Activated CD4-positive, alpha-beta T cell treated with anti-CD3 and anti-CD28 coated beads, Interleukin-2, amount 10 ng/mL, durations not matched to agents 24 days and 14 days (primary cell): ENCODE measurements at regions of chr7 and their contacts with region 1.

Region 1: DNA sequence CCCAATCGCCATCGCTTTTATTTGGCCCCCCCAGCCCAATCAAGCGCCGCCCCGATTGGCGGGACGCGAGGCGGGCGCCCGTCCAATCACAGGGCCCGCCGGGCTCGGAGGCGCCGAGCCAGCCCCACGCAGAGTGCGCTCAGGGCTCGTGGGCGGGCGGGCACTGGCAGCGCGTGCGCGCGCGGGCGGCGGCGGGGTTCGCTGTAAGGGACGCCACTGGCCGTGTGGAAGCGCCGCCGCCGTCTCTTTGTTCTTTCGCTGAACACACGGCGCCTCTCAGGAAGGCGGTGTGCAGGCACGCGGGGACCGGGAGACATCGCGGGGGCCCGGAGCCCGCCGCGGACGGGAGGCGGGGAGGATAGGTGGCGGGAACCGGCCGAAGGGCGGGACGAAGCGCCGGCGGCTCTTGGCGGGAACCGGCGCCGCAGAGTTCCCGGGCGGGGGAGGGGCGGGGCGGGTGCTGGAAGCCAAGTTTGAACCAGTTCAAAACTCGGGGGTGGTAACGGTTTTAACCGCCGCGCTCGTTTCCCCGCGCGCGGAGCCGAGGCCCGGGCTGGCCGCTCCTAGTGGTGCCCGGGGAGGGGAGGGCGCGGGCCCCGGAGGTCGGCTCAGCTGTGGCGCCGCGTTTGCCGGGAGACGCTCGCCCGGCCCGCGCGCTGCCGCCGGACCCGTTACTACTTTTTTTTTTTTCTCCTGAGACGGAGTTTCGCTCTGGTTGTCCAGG is 370 bp upstream of the EZH2 start:
- DNase-seq: peak; percentile 99
- H3K4me3 Mint-ChIP-seq: peak overlapping the region; percentile 93
- H3K27ac Mint-ChIP-seq: peak overlapping the region; percentile 99
- H3K4me1 Mint-ChIP-seq: peaks cover 26% of the 10 kb centered on the region
- H3K27me3 Mint-ChIP-seq: no peaks in the 10 kb centered on the region

Region 2: DNA sequence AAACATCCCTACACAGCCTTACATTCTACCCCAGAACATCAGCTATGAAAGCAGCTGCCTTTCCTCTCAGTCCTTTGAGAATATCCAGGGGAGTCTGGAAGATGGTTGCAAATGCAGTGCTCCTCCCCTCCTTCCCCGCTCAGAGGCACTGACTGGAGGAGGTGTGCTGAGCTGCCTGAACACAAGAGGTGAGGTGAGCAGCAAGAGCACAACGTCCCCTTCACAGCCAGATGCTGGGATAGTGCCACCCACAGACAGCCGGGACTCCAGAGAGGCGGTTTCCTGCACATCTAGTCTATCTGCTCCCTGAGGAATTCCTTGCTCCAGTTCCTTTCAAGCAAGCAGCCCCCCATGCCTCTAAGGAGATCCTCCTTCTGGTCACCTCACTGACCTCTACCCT is 74.6 kb before region 1 on chr7:
- intact Hi-C with region 1: no loop called
- DNase-seq: peak; percentile 47
- H3K4me3 Mint-ChIP-seq: no peak overlapping the region
- H3K27ac Mint-ChIP-seq: no peak overlapping the region
- H3K4me1 Mint-ChIP-seq: peaks cover 2% of the 10 kb centered on the region
- H3K27me3 Mint-ChIP-seq: no peaks in the 10 kb centered on the region

Region 3: GRCh38 chr7:148849393-148850098 is 34.9 kb before region 1 on chr7:
- intact Hi-C with region 1: loop called (anchors 5 kb)
- DNase-seq: no peak
- H3K4me3 Mint-ChIP-seq: no peak overlapping the region
- H3K27ac Mint-ChIP-seq: peak overlapping the region; percentile 22
- H3K4me1 Mint-ChIP-seq: peaks cover 50% of the 10 kb centered on the region
- H3K27me3 Mint-ChIP-seq: no peaks in the 10 kb centered on the region

Region 4: GRCh38 chr7:148856891-148857290 is 27.6 kb before region 1 on chr7:
- intact Hi-C with region 1: loop called (anchors 1 kb)
- DNase-seq: no peak
- H3K4me3 Mint-ChIP-seq: peak overlapping the region; percentile 32
- H3K27ac Mint-ChIP-seq: peak overlapping the region; percentile 79
- H3K4me1 Mint-ChIP-seq: peaks cover 40% of the 10 kb centered on the region
- H3K27me3 Mint-ChIP-seq: no peaks in the 10 kb centered on the region

Region 5: DNA sequence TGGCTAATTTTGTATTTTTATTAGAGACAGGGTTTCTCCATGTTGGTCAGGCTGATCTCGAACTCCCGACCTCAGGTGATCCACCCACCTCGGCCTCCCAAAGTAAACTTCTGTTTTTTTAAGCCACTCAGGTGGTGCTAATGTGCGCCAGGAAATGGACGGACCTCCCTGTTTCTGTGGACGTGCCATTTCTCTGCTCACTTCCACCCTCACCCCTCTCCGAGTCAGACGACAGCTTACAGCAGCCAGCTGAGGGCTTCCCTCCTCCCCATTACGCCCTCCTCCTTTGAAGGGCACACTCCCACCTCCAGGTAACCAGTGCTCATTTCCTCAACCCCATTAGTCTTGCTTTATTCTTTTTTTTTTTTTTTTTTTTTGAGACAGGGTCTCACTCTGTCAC is 41.4 kb after region 1 on chr7:
- intact Hi-C with region 1: loop called (anchors 1 kb)
- DNase-seq: no peak
- H3K4me3 Mint-ChIP-seq: no peak overlapping the region
- H3K27ac Mint-ChIP-seq: no peak overlapping the region
- H3K4me1 Mint-ChIP-seq: peaks cover 46% of the 10 kb centered on the region
- H3K27me3 Mint-ChIP-seq: no peaks in the 10 kb centered on the region

Region 6: DNA sequence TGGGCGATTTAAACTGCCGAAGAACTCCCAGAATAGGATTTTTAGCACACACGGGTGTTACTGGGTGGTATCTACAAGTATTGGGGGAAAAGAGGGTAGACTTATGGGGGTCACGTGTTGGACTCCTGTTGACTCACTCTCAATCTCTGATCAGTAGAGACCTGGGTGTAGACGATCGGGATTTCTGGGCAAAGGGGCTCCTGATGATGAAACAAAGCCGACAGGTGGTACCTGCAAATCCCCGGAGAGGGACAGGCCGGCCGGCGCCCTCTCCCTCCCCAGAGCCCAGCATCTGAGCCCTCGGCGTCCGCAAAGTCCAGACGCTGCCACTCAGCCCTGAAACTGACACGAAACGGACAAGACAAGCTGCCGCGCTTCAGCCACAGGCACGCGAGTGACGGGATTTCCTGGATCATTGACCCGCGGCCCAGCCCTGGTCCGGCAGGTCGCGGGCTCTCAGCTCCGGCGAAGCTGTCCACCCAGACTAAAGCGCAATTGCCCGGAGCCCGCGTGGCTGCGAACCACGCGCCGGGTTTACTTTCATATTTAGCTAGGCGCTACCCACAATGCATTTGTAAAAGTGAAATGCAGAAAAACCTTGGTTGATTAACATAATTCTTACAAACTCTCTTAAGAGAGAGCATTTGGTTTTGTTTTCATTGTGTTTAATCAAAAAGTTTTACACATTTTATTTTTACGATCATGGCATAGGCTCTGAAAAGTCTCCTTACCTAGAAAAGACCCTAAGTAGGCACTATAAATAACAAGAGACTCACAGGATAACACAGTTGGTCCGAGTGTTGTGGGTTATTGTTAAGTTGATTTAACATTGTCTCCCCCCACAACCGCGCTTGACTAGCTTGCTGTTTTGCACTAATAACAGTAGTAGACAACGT is 56.5 kb after region 1 on chr7:
- intact Hi-C with region 1: loop called (anchors 1 kb)
- DNase-seq: peak; percentile 92
- H3K4me3 Mint-ChIP-seq: peak overlapping the region; percentile 97
- H3K27ac Mint-ChIP-seq: peak overlapping the region; percentile 99
- H3K4me1 Mint-ChIP-seq: peaks cover 17% of the 10 kb centered on the region
- H3K27me3 Mint-ChIP-seq: no peaks in the 10 kb centered on the region

Region 7: DNA sequence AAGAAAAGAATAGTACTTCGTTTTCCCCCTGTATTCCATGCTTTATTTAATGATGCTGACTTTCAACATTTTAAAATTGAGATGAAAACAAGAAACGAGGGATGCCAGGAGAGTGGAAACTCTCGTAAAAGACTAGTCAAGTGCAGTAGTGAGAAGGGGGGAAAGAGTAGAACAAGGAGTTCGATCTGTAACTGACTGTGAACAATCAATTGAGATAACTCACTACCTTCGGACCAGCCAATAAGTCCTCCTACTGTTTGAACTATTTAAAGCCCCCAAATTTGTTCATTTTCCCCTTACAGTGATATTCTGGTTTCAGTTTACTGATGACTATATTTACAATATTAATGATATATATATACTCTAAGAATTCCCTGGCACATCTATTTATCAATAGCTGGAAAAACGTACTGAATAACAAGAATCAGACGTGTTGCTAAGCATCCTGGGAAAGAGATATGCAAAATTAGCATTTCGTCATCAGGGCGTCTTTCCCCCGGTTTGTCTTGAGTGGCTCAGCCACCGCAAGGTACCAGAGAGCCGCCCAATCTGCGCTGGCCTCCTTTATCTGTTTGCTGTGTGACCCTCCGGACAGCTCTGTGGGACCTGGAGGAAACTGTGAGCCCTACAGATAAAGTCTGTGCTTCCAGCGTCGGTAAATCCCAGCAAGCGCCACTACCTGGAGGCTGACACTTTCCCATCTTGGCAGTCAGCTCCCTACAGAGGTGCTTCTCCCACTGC is 102.7 kb after region 1 on chr7:
- intact Hi-C with region 1: loop called (anchors 1 kb)
- DNase-seq: peak; percentile 94
- H3K4me3 Mint-ChIP-seq: peak overlapping the region; percentile 95
- H3K27ac Mint-ChIP-seq: peak overlapping the region; percentile 94
- H3K4me1 Mint-ChIP-seq: peaks cover 41% of the 10 kb centered on the region
- H3K27me3 Mint-ChIP-seq: peaks cover 23% of the 10 kb centered on the region

Region 8: DNA sequence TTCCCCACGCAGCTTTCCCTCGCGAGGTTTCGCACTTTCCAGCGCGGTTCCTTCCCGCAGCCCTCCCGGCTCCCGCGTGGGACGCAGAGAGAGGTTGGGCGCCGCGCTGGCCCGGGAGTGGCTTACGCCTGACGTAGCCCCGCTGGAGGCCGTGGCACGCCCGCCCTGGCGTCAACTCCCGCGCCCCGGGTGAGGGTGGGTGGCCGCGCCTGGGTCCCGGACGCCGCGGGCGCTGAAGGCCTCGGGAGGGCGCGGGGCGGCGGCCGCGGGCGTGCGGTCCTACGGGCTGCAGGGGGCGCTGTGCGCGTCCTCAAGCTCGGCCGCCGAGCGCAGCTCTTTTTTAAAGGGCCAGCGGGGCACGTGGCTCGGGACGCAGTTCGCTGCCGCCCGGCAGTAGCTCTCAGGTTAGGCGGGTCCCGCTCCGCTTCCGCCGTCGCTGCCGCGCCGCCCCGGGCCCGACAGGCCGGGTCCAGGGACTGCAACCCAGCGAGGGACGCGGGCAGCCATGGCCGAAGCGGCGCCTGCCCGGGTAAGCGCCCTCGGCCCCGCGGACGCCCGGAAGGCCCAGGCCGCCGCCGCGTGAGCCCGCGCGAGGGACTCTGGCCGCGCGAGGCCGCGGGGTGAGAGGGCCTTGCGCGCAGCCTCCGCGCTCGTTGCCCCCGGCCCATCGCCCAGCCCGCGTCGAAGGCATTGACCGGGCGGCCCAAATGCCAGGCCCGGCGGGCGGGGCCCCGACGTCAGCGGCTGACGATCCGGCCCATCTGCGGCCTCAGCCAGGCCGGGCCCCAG is 377.6 kb after region 1 on chr7 and contains the start of gene ZNF783:
- intact Hi-C with region 1: no loop called
- DNase-seq: peak; percentile 96
- H3K4me3 Mint-ChIP-seq: peak within 1 kb of the TSS; percentile 85
- H3K27ac Mint-ChIP-seq: peak within 1 kb of the TSS; percentile 97
- H3K4me1 Mint-ChIP-seq: peaks cover 22% of the 10 kb centered on the region
- H3K27me3 Mint-ChIP-seq: no peaks in the 10 kb centered on the region
- total RNA-seq, gene ZNF783: 27.2 and 27.4 TPM in 2 replicates